ENCODE measurements at regions of chr17 and their contacts with region 1.

Region 1: GRCh38 chr17:50200457-50201275 is 765 bp downstream of the COL1A1 start:
- DNase-seq: peak; percentile 76
- ATAC-seq: peak; percentile 80
- H3K4me3 Mint-ChIP-seq: peak overlapping the region; percentile 80
- H3K27ac Mint-ChIP-seq: no peak overlapping the region
- H3K4me1 Mint-ChIP-seq: peaks cover 27% of the 10 kb centered on the region
- H3K27me3 Mint-ChIP-seq: peaks cover 44% of the 10 kb centered on the region
- CTCF ChIP-seq: peak; percentile 100

Region 2: GRCh38 chr17:50114849-50115357 is 85.8 kb before region 1 on chr17:
- CTCF ChIA-PET with region 1: interaction called, 10 read pairs
- POLR2A ChIA-PET with region 1: no interaction called
- intact Hi-C with region 1: loop called (anchors 1 kb)
- DNase-seq: no peak
- ATAC-seq: peak; percentile 18
- H3K4me3 Mint-ChIP-seq: peak overlapping the region; percentile 28
- H3K27ac Mint-ChIP-seq: no peak overlapping the region
- H3K4me1 Mint-ChIP-seq: peaks cover 14% of the 10 kb centered on the region
- H3K27me3 Mint-ChIP-seq: peaks cover 36% of the 10 kb centered on the region
- CTCF ChIP-seq: no peak

Region 3: DNA sequence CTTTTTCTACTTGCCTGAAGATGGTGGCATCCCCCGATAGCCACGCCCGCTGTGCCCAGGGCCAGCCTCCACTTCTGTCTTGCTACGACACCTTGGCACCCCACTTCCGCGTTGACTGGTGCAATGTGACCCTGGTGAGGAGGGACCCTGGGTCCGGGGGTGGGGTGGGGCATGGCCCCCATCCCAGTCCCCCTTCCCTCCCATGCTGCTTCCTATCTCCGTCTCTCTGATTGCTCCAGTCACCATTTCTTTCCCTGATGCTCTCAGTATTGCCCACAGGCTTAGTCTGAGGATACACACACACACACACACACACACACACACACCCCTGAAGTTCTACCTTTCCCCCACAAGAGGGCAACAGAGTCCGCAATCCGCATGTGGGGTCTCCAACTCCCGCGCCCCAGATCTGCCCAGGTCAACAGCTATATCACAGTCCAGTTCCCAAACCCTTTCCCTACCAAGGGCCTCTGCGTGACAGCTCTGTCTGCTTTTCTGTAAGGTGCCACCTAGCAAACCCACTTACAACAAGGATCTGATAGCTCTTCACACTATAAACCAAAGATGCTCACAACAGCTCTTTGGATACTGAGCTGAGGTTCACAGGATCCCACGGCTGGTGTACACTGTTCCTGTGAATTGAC is 31.4 kb before region 1 on chr17:
- CTCF ChIA-PET with region 1: interaction called, 86 read pairs
- POLR2A ChIA-PET with region 1: interaction called, 16 read pairs
- intact Hi-C with region 1: loop called (anchors 1 kb)
- DNase-seq: peak; percentile 53
- ATAC-seq: peak; percentile 81
- H3K4me3 Mint-ChIP-seq: peak overlapping the region; percentile 49
- H3K27ac Mint-ChIP-seq: peak overlapping the region; percentile 50
- H3K4me1 Mint-ChIP-seq: peaks cover 29% of the 10 kb centered on the region
- H3K27me3 Mint-ChIP-seq: no peaks in the 10 kb centered on the region
- CTCF ChIP-seq: no peak

Region 4: DNA sequence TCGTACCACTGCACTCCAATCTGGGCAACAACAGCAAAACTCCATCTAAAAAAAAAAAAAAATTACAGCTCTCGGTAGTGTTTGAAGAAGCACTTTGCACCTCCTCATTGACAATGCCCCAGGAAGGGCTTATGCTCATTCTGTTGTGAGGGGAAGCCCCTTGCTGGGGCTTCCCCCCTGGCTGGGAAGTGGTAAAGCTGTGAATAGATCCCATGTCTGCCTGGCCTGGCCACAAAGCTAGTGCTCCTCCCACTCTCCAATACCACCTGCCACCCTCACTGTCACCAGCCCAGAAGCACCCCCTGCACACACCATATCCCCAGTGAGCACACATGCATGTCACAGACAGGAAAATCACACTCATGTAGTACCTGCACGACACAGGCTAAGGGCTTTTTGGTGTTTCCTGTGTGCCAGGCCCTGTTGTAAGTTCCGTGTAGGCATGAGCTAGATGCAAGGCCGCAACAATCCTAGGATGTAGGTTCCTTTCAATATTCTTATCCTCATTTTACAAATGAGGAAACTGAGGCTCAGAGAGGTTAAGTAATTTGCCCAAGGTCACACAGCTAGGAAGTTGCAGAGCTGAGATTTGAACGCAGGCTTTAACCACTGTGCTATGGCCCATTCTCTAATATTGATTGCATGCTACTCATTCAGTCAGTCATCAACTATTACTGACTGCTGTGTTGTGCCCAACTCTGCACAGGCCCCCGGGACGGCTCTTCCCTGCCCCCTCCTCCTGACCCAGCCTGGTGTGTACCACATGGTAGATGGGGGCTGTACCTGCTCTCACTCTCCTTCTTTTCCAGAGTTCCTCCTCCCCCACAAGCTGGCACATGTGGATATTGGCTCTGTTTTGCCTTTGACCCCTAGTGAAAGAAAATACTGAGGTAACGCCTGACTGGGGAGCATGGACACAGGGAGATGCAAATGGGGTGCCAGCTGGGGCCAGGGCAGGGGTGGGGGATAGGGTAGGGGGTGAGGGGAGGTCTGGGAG is 12.7 kb after region 1 on chr17:
- CTCF ChIA-PET with region 1: interaction called, 12 read pairs
- POLR2A ChIA-PET with region 1: no interaction called
- intact Hi-C with region 1: no loop called
- DNase-seq: no peak
- ATAC-seq: peak; percentile 92
- H3K4me3 Mint-ChIP-seq: no peak overlapping the region
- H3K27ac Mint-ChIP-seq: no peak overlapping the region
- H3K4me1 Mint-ChIP-seq: peaks cover 12% of the 10 kb centered on the region
- H3K27me3 Mint-ChIP-seq: peaks cover 29% of the 10 kb centered on the region
- CTCF ChIP-seq: no peak

Region 5: GRCh38 chr17:50297407-50297865 is 96.8 kb after region 1 on chr17:
- CTCF ChIA-PET with region 1: interaction called, 98 read pairs
- POLR2A ChIA-PET with region 1: no interaction called
- intact Hi-C with region 1: loop called (anchors 1 kb)
- DNase-seq: peak; percentile 67
- ATAC-seq: peak; percentile 100
- H3K4me3 Mint-ChIP-seq: no peak overlapping the region
- H3K27ac Mint-ChIP-seq: no peak overlapping the region
- H3K4me1 Mint-ChIP-seq: no peaks in the 10 kb centered on the region
- H3K27me3 Mint-ChIP-seq: peaks cover 17% of the 10 kb centered on the region
- CTCF ChIP-seq: peak; percentile 21

Measured in activated B cell treated with CpG ODN at 0.5 μM for 24 hours (primary cell).